ENCODE measurements at regions of chr5 and their contacts with region 1.

Region 1: DNA sequence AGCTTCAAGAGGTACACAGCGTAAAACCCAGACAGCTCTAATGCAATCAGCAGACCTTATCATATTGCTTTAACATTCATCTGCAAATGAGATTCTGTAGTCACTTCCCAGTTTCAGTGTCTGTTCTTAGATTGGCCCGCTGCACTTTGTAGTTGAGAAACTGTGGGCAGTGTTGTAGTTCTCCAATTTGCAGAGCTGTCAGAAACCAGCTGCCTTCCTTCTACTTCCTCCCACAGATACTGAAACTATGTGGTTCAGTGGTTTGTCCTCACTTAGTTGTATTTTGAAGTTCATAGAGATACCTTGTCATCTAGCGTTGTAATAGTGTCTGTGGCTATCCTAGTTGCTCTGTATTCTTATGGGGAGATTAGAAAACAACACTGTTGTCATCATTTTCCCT is 39.6 kb upstream of the TRIM36 start:
- DNase-seq: peak; percentile 66
- H3K4me3 Mint-ChIP-seq: no peak overlapping the region
- H3K27ac Mint-ChIP-seq: no peak overlapping the region
- H3K4me1 Mint-ChIP-seq: peaks cover 9% of the 10 kb centered on the region
- H3K27me3 Mint-ChIP-seq: no peaks in the 10 kb centered on the region

Region 2: GRCh38 chr5:115184780-115185179 is 24.5 kb before region 1 on chr5:
- CTCF ChIA-PET with region 1: no interaction called
- POLR2A ChIA-PET with region 1: no interaction called
- intact Hi-C with region 1: loop called (anchors 2 kb)
- DNase-seq: no peak
- H3K4me3 Mint-ChIP-seq: no peak overlapping the region
- H3K27ac Mint-ChIP-seq: no peak overlapping the region
- H3K4me1 Mint-ChIP-seq: peaks cover 6% of the 10 kb centered on the region
- H3K27me3 Mint-ChIP-seq: peaks cover 42% of the 10 kb centered on the region

Region 3: GRCh38 chr5:115196161-115196560 is 13.1 kb before region 1 on chr5:
- CTCF ChIA-PET with region 1: no interaction called
- POLR2A ChIA-PET with region 1: no interaction called
- intact Hi-C with region 1: no loop called
- DNase-seq: no peak
- H3K4me3 Mint-ChIP-seq: no peak overlapping the region
- H3K27ac Mint-ChIP-seq: no peak overlapping the region
- H3K4me1 Mint-ChIP-seq: no peaks in the 10 kb centered on the region
- H3K27me3 Mint-ChIP-seq: no peaks in the 10 kb centered on the region

Region 4: DNA sequence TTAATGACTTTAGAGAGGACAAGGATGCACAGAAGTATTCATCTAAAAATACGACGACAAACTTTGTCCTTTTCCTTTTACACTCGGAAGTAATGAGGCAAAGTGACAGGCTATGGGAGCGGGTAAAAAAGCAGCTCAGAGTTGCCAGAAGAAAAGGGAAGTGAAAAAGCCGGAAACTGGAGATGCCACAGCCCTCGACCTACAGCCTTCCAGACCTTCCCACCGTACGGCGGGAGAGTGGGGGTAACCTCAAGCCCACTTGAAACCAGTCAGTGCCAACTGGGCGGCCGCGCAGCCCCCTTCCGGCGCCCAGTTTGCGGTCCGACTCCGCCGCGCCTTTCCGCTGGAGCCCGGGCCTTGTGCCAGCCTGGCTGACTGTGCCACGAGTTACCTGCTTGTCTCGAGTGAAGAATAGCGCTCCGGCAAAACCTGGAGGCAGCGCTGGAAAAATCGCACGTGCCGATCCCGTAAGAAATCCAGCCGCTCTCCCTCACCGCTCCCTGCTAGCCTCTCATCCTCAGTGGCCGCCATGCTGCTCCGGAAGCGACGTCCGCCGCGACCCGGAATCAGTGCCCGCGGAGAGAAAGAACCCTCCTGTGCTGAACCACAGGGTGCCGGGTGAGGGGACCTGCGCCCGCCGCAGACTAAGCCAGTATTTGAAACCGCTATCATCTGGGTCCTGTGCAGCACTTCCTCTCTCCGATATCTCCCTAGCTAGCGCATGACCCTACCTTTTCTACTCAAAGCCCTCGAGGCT is 53.2 kb after region 1 on chr5 and contains the start of gene PGGT1B:
- CTCF ChIA-PET with region 1: no interaction called
- POLR2A ChIA-PET with region 1: interaction called, 3 read pairs
- intact Hi-C with region 1: loop called (anchors 1 kb)
- DNase-seq: peak; percentile 85
- H3K4me3 Mint-ChIP-seq: peak within 1 kb of the TSS; percentile 92
- H3K27ac Mint-ChIP-seq: peak within 1 kb of the TSS; percentile 80
- H3K4me1 Mint-ChIP-seq: peaks cover 47% of the 10 kb centered on the region
- H3K27me3 Mint-ChIP-seq: no peaks in the 10 kb centered on the region
- total RNA-seq, gene PGGT1B: 38.7 TPM

Region 5: DNA sequence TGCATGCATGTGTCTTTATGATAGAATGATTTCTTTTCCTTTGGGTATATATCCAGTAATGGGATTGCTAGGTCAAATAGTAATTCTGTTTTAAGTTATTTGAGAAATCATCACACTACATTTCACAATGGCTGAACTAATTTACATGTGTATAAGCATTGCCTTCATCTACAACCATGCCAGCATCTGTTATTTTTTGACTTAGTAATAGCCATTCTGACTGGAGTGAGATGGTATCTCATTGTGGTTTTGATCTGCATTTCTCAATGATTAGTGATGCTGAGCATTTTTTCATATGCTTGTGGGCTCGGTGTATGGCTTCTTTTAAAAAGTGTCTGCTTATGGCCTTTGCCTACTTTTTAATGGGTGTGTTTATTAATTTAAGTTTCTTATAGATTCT is 189.4 kb after region 1 on chr5:
- CTCF ChIA-PET with region 1: no interaction called
- POLR2A ChIA-PET with region 1: no interaction called
- intact Hi-C with region 1: no loop called
- DNase-seq: no peak
- H3K4me3 Mint-ChIP-seq: no peak overlapping the region
- H3K27ac Mint-ChIP-seq: no peak overlapping the region
- H3K4me1 Mint-ChIP-seq: no peaks in the 10 kb centered on the region
- H3K27me3 Mint-ChIP-seq: no peaks in the 10 kb centered on the region

Region 6: DNA sequence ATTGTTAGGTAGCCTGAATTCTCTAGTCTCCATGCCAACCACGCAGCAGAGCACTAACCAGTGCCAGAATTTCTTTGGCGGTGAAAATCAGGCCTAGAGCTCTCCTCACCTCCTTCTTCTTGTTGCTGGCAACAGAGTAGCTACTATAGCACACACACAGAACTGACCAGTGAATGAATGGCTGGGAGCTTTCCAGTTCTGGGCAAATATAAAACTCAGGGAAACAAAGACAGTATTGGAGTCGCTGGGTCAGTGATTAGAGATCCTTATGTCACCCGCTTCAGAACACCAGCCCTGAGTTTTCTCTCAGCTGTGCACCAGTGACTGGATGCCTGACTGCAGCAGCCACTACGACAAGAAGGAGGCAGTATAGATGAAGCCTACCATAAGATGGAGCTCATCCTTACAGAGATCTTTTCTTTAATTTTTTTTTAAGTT is 362.2 kb after region 1 on chr5:
- CTCF ChIA-PET with region 1: no interaction called
- POLR2A ChIA-PET with region 1: no interaction called
- intact Hi-C with region 1: no loop called
- DNase-seq: no peak
- H3K4me3 Mint-ChIP-seq: no peak overlapping the region
- H3K27ac Mint-ChIP-seq: no peak overlapping the region
- H3K4me1 Mint-ChIP-seq: peaks cover 3% of the 10 kb centered on the region
- H3K27me3 Mint-ChIP-seq: peaks cover 3% of the 10 kb centered on the region